ENCODE measurements at regions of chr1 and their contacts with region 1.

Region 1: GRCh38 chr1:40668769-40669525 is 3.5 kb upstream of the RIMS3 start:
- DNase-seq: peak; percentile 85
- ATAC-seq: peak; percentile 66
- H3K4me3 ChIP-seq: peak overlapping the region; percentile 63
- H3K27ac ChIP-seq: no peak overlapping the region
- H3K4me1 ChIP-seq: peaks cover 8% of the 10 kb centered on the region
- H3K27me3 ChIP-seq: no peaks in the 10 kb centered on the region
- CTCF ChIP-seq: peak; percentile 90

Region 2: GRCh38 chr1:40014812-40015594 is 653.9 kb before region 1 on chr1:
- CTCF ChIA-PET with region 1: interaction called, 16 read pairs
- POLR2A ChIA-PET with region 1: no interaction called
- intact Hi-C with region 1: no loop called
- DNase-seq: peak; percentile 97
- ATAC-seq: peak; percentile 96
- H3K4me3 ChIP-seq: no peak overlapping the region
- H3K27ac ChIP-seq: peak overlapping the region; percentile 96
- H3K4me1 ChIP-seq: peaks cover 23% of the 10 kb centered on the region
- H3K27me3 ChIP-seq: no peaks in the 10 kb centered on the region
- CTCF ChIP-seq: no peak

Region 3: DNA sequence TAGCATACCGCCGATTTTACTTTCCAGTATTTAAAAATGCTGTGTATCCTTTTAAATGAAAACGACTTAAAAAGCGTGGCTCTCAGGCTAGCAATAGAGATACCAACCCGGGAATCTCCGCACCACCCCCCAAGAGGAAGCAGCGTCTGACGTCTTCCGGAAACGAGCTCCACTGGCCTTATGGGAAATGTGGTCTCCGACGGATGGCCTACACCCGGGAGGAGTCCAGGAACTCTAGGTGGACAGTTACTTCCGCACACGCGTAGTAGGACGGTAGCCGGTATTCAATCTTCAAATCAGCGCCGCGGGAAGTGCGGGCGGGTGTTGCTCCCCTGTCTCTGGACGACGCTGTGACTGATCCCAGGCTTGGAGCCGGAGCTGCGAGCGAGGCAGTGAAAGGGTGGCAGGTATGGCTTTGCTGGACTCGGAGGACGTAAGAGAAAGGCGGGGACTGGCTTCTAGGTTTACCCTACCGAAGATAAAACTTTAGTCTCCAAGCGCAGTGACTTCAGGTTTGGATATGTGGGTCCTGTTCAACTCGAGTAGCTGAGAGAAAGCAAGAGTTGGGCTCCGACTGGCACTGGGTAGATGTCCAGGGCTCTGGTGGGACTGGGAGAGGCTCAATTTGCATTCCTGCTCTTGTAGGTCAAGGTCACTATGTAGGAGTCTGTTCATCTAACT is 137.4 kb before region 1 on chr1 and contains the start of gene ZNF684:
- CTCF ChIA-PET with region 1: no interaction called
- POLR2A ChIA-PET with region 1: no interaction called
- intact Hi-C with region 1: loop called (anchors 5 kb)
- DNase-seq: peak; percentile 95
- ATAC-seq: peak; percentile 99
- H3K4me3 ChIP-seq: peak within 1 kb of the TSS; percentile 69
- H3K27ac ChIP-seq: peak within 1 kb of the TSS; percentile 62
- H3K4me1 ChIP-seq: peaks cover 12% of the 10 kb centered on the region; the same call in 1 of the 2 replicates
- H3K27me3 ChIP-seq: no peaks in the 10 kb centered on the region
- CTCF ChIP-seq: no peak
- total RNA-seq, gene ZNF684: 2.1 and 6.0 TPM in 2 replicates

Region 4: DNA sequence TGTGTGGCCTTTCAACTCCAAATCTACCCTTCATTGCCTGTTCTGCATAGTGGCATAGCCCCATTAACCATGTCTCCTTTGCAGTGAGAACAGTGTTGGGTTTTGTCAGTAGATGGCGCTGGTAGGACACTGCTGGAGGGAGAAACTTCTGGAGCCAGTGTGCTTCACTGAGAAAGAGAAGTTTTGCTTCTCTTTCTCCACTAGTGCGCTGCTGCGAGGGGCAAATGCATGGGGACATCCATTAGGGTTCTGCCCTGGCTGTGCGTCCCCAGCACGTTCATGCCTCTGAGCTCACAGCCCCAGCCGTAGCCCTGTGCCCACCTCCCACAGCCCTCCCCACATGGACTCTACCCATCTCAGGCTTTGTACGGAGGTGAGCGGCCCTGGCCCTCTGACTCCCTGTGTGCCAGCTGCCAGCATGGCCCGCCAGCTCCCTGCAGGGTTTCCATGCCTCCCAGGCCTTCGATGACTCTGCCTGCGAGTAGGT is 56.6 kb before region 1 on chr1:
- CTCF ChIA-PET with region 1: no interaction called
- POLR2A ChIA-PET with region 1: no interaction called
- intact Hi-C with region 1: loop called (anchors 1 kb)
- DNase-seq: peak; percentile 85
- ATAC-seq: peak; percentile 99
- H3K4me3 ChIP-seq: peak overlapping the region; percentile 55; the same call in 1 of the 2 replicates
- H3K27ac ChIP-seq: no peak overlapping the region
- H3K4me1 ChIP-seq: no peaks in the 10 kb centered on the region
- H3K27me3 ChIP-seq: no peaks in the 10 kb centered on the region
- CTCF ChIP-seq: peak; percentile 92

Region 5: GRCh38 chr1:40625066-40625465 is 43.9 kb before region 1 on chr1:
- CTCF ChIA-PET with region 1: interaction called, 6 read pairs
- POLR2A ChIA-PET with region 1: no interaction called
- intact Hi-C with region 1: loop called (anchors 5 kb)
- DNase-seq: peak; percentile 48
- ATAC-seq: peak; percentile 85
- H3K4me3 ChIP-seq: no peak overlapping the region
- H3K27ac ChIP-seq: no peak overlapping the region
- H3K4me1 ChIP-seq: peaks cover 16% of the 10 kb centered on the region
- H3K27me3 ChIP-seq: no peaks in the 10 kb centered on the region
- CTCF ChIP-seq: peak; percentile 66